Heart left ventricle (tissue), 16 donors: ENCODE measurements at regions of chr6 and their contacts with region 1.

Region 1: GRCh38 chr6:13614926-13615798 is at the start of gene NOL7:
- DNase-seq: peak; percentile 98 to 99 (median 98)
- ATAC-seq: peak; percentile 96 to 98 (median 96)
- H3K4me3 ChIP-seq: peak within 1 kb of the TSS; percentile 66 to 96 (median 83)
- H3K27ac ChIP-seq: peak within 1 kb of the TSS; percentile 75 to 94 (median 89)
- H3K4me1 ChIP-seq: peaks cover 3 to 48% (median 27%) of the 10 kb centered on the region in 12 donors
- H3K27me3 ChIP-seq: no peaks in the 10 kb centered on the region
- CTCF ChIP-seq: peak; percentile 83 to 99 (median 92)
- POLR2A ChIP-seq: peak in 1 of 2 donors; percentile 72
- total RNA-seq, gene NOL7: 38.6 to 118 (median 47.8) TPM

Region 2: DNA sequence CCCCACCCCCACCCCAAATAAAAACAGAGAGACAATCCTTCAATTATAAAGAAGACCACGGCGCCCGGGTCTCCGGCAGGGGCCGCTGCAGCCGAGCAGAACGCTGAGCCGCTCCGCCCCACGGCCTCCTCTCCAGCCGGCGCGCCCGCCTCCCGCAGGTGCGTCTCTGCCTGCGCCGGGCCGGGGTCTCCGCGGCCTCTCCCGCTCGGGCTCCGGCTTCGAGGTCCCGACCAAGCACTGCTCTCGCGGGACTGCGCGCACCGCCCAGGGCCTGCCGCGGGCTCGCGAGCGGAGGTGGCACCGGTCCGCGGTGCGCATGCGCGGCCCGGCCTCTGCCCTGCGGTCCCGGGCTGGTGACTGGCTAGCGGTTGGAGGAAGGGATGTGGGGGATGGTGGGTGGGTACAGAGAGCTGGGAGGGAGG is 41.0 kb before region 1 on chr6:
- intact Hi-C with region 1: loop called in 4 of 10 experiments (anchors 2 to 5 kb)
- DNase-seq: peak; percentile 94 to 96 (median 95)
- ATAC-seq: peak; percentile 96 to 97 (median 96)
- H3K4me3 ChIP-seq: peak overlapping the region; percentile 30 to 93 (median 85)
- H3K27ac ChIP-seq: peak overlapping the region; percentile 93 to 100 (median 98)
- H3K4me1 ChIP-seq: peaks cover 0 to 31% (median 15%) of the 10 kb centered on the region in 12 donors
- H3K27me3 ChIP-seq: no peaks in the 10 kb centered on the region
- CTCF ChIP-seq: peak; percentile 31 to 73 (median 50)
- POLR2A ChIP-seq: no peak

Region 3: GRCh38 chr6:13795041-13795750 is 180.0 kb after region 1 on chr6:
- intact Hi-C with region 1: no loop called
- DNase-seq: peak; percentile 76 to 85 (median 79)
- ATAC-seq: peak; percentile 58 to 90 (median 88)
- H3K4me3 ChIP-seq: no peak overlapping the region
- H3K27ac ChIP-seq: no peak overlapping the region
- H3K4me1 ChIP-seq: peaks cover 0 to 5% (median 0%) of the 10 kb centered on the region in 12 donors
- H3K27me3 ChIP-seq: no peaks in the 10 kb centered on the region
- CTCF ChIP-seq: peak; percentile 85 to 97 (median 92)
- POLR2A ChIP-seq: no peak